ENCODE measurements at regions of chr14 and their contacts with region 1.

Region 1: DNA sequence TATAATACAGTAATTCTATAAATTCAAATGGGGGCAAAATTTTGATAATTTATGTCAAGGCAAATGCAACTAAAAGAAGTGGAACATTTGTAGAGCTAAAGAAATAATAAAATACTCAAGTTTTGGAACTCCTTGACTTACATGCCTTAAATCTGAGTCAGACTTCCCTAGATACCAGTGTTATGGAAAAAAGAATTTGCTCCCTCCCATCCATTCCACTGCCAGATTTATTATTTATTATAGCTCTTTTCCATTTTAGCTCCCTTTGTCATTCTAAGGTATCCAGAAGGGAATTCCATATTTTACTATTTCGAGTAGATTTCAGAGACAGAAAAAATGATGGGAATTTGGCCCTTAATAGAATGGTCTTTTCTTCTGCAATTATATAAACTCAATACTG is 44.0 kb downstream of the RHOJ start:
- DNase-seq: no peak
- H3K4me3 ChIP-seq: no peak overlapping the region
- H3K27ac ChIP-seq: peak overlapping the region in 3 of 4 donors; percentile 48 to 61 (median 53)
- H3K4me1 ChIP-seq: peaks cover 0 to 49% (median 35%) of the 10 kb centered on the region in 4 donors
- H3K27me3 ChIP-seq: no peaks in the 10 kb centered on the region
- CTCF ChIP-seq: no peak
- EP300 ChIP-seq: no peak
- POLR2A ChIP-seq: no peak

Region 2: GRCh38 chr14:63203618-63204406 is 44.4 kb before region 1 on chr14:
- intact Hi-C with region 1: loop called (anchors 5 kb)
- DNase-seq: peak; percentile 94
- H3K4me3 ChIP-seq: peak overlapping the region; percentile 43 to 53 (median 50)
- H3K27ac ChIP-seq: peak overlapping the region; percentile 77 to 91 (median 86)
- H3K4me1 ChIP-seq: peaks cover 0 to 33% (median 17%) of the 10 kb centered on the region in 4 donors
- H3K27me3 ChIP-seq: no peaks in the 10 kb centered on the region
- CTCF ChIP-seq: no peak
- EP300 ChIP-seq: no peak
- POLR2A ChIP-seq: peak; percentile 23

Region 3: DNA sequence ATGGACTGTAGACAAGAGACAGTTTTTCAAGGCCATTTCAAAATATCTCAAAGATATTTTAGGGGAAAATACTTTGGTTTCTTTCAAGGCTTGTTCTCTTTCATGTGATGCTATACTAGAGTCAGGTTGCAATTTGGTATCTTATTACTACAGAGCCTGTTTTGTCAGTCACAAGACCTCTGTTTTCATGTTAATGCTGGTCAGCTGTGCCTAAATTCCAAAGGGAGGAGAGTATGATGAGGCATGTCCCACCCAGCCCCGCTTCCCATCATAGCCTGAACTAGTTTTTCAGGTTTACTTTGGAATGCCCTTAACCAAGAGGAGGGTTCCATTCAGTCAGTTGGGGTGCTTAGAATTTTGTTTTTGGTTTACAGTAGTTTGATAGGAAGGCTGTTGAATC is 17.9 kb after region 1 on chr14:
- intact Hi-C with region 1: no loop called
- DNase-seq: no peak
- H3K4me3 ChIP-seq: no peak overlapping the region
- H3K27ac ChIP-seq: peak overlapping the region in 1 of 4 donors; percentile 19
- H3K4me1 ChIP-seq: peaks cover 0 to 3% (median 0%) of the 10 kb centered on the region in 4 donors
- H3K27me3 ChIP-seq: no peaks in the 10 kb centered on the region
- CTCF ChIP-seq: no peak
- EP300 ChIP-seq: no peak
- POLR2A ChIP-seq: no peak

Measured in sigmoid colon (tissue), 7 donors.